Left colon (tissue), 2 donors: ENCODE measurements at regions of chr20 and their contacts with region 1.

Region 1: GRCh38 chr20:4607287-4607713 is 114.4 kb upstream of the PRND start:
- DNase-seq: peak in 1 of 2 donors; percentile 26
- ATAC-seq: peak; percentile 72

Region 2: DNA sequence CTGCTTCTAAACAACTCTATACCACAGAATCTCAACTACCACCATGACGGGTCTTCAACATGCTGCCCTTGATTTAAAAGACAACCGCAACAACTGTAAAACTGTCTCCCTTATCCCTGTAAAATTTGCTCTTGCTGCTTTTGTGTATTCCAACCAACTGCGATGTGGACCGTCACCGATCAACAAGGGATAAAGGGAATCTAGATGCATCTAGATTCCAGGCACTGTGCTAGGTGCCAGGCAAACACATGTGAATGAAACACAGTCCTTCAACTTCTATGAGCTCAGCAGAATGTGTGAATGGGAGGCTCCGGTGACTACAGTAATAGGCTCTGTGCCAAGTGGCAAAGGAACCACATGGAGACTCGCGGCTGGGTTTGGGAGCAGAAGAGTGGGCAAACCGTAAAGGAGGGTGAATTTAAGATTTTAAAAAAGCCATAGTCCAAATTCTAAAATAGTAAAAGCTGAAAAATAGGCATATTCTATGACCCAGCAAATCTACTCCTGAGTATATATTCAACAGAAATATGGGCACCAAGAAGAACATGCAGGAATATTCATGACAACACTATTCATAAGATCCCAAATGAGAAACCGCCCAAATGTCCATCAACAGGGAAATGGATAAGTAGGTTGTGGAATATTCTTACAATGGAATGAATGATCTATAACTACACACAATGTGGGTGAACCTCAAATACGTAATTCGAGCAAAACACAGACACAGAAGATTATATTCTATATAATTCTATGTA is 110.7 kb after region 1 on chr20:
- intact Hi-C with region 1: loop called in 1 of 2 experiments (anchors 2 kb)
- DNase-seq: no peak
- ATAC-seq: no peak